ENCODE measurements at regions of chr9 and their contacts with region 1.

Region 1: GRCh38 chr9:35814841-35815543 is at the start of gene HINT2:
- DNase-seq: peak; percentile 99
- ATAC-seq: peak; percentile 85
- H3K4me3 Mint-ChIP-seq: peak within 1 kb of the TSS; percentile 93
- H3K27ac Mint-ChIP-seq: peak within 1 kb of the TSS; percentile 98
- H3K4me1 Mint-ChIP-seq: peaks cover 33% of the 10 kb centered on the region
- H3K27me3 Mint-ChIP-seq: no peaks in the 10 kb centered on the region
- total RNA-seq, gene HINT2: 47.4 to 61.1 TPM

Region 2: DNA sequence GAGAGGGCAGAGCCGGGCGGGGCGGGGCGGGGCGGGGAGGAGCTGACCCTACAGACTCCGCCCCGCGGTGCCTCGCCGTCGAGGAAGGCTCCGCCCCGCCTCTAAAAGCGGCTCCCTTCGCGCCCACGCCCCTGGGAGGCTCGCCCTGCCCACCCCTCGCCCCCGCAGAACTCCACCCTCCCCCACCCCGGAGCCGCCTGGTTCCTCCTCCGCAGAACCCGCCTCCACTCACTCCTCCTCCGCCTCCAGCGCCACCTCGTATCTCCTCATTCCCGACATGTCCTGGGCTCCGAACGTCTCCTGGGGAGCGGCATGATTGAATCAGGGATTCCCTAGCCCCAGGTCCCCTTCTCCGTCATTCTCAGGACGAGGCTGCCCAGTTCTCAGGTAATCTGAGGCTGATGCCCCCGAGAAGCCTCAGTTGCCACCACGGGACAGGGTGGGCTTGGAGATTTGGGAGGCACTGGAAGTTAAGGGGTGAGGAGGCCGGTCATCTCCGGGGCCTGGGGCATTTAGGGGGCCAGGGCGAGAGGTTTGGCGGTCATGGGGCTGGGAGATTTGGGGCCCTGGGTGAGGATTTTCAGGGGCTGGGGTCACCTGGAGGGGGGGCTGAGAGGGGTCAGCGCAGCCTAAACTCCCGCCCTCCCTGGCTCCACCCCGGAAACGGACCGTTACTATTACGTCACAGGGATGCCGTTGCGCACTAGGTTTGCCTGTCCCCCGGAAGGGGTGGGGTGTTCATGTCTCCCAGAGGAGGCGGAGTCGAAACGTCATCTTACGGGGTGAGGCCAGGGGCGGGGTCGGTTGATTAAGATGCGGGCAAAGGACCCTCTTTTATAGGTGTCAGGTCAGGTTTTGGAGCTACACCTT is 1149.4 kb before region 1 on chr9:
- CTCF ChIA-PET with region 1: no interaction called
- POLR2A ChIA-PET with region 1: no interaction called
- intact Hi-C with region 1: loop called in 1 of 2 experiments (anchors 10 kb)
- DNase-seq: peak; percentile 93
- ATAC-seq: peak; percentile 75
- H3K4me3 Mint-ChIP-seq: peak overlapping the region; percentile 77
- H3K27ac Mint-ChIP-seq: peak overlapping the region; percentile 87
- H3K4me1 Mint-ChIP-seq: peaks cover 33% of the 10 kb centered on the region
- H3K27me3 Mint-ChIP-seq: no peaks in the 10 kb centered on the region

Region 3: GRCh38 chr9:35116898-35117551 is 698.0 kb before region 1 on chr9:
- CTCF ChIA-PET with region 1: no interaction called
- POLR2A ChIA-PET with region 1: no interaction called
- intact Hi-C with region 1: loop called (anchors 1 to 10 kb)
- DNase-seq: peak; percentile 94
- ATAC-seq: peak; percentile 66
- H3K4me3 Mint-ChIP-seq: peak overlapping the region; percentile 77
- H3K27ac Mint-ChIP-seq: peak overlapping the region; percentile 87
- H3K4me1 Mint-ChIP-seq: peaks cover 44% of the 10 kb centered on the region
- H3K27me3 Mint-ChIP-seq: no peaks in the 10 kb centered on the region

Region 4: GRCh38 chr9:35579130-35579529 is 235.9 kb before region 1 on chr9:
- CTCF ChIA-PET with region 1: no interaction called
- POLR2A ChIA-PET with region 1: no interaction called
- intact Hi-C with region 1: no loop called
- DNase-seq: peak; percentile 69
- ATAC-seq: peak; percentile 96
- H3K4me3 Mint-ChIP-seq: peak overlapping the region; percentile 28
- H3K27ac Mint-ChIP-seq: peak overlapping the region; percentile 89
- H3K4me1 Mint-ChIP-seq: peaks cover 23% of the 10 kb centered on the region
- H3K27me3 Mint-ChIP-seq: no peaks in the 10 kb centered on the region

Region 5: GRCh38 chr9:35690431-35691333 is 124.3 kb before region 1 on chr9:
- CTCF ChIA-PET with region 1: no interaction called
- POLR2A ChIA-PET with region 1: no interaction called
- intact Hi-C with region 1: loop called in 1 of 2 experiments (anchors 1 kb)
- DNase-seq: peak; percentile 56
- ATAC-seq: no peak
- H3K4me3 Mint-ChIP-seq: peak overlapping the region; percentile 71
- H3K27ac Mint-ChIP-seq: peak overlapping the region; percentile 47
- H3K4me1 Mint-ChIP-seq: peaks cover 23% of the 10 kb centered on the region
- H3K27me3 Mint-ChIP-seq: no peaks in the 10 kb centered on the region

Region 6: GRCh38 chr9:35829084-35829763 is 14.2 kb after region 1 on chr9 and contains the start of gene TMEM8B:
- CTCF ChIA-PET with region 1: interaction called, 13 read pairs
- POLR2A ChIA-PET with region 1: no interaction called
- intact Hi-C with region 1: loop called (anchors 1 kb)
- DNase-seq: peak; percentile 98
- ATAC-seq: peak; percentile 92
- H3K4me3 Mint-ChIP-seq: peak within 1 kb of the TSS; percentile 78
- H3K27ac Mint-ChIP-seq: peak within 1 kb of the TSS; percentile 78
- H3K4me1 Mint-ChIP-seq: peaks cover 13% of the 10 kb centered on the region
- H3K27me3 Mint-ChIP-seq: no peaks in the 10 kb centered on the region
- total RNA-seq, gene TMEM8B: 5.8 to 6.9 TPM

Region 7: DNA sequence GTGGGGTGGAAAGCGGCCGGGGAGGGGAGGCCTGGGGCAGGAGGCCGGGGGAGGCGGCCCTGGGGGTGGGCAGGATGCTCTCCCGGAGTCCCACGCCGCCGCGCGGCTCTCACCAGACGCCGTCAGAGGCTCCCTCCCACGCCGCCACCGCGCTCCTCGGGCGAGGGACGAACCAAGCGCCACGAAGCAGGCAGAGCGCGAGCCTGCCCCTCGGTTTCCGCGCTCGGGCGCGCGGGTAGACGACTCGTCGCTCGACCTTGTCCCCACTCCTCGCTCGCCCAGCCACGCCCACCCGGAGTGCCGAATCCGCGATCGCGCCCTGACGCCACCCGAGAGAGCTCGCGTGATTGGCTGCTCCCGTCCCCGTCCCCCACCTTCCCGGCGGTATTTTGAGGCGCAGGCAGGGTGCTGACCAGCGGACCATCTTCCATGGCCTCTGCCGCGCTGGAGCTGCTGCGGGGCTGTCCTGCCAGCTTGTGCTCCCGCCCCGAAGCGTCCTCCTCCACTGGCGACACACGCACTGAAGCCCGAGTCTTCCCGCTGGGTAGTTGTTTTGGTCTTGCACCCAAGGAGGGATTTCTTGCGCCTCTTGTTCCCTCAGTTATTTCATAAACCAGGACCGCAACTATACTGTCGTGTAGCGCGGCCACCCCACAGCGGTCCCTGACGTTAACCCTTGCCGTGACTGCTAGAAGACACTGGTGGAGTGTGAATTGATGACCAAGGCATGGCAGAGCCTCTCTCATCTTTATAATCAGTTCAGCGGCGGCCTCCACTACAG is 443.4 kb after region 1 on chr9 and contains the start of gene GNE:
- CTCF ChIA-PET with region 1: no interaction called
- POLR2A ChIA-PET with region 1: no interaction called
- intact Hi-C with region 1: loop called in 1 of 2 experiments (anchors 1 kb)
- DNase-seq: peak; percentile 99
- ATAC-seq: peak; percentile 85
- H3K4me3 Mint-ChIP-seq: peak within 1 kb of the TSS; percentile 91
- H3K27ac Mint-ChIP-seq: peak within 1 kb of the TSS; percentile 90
- H3K4me1 Mint-ChIP-seq: peaks cover 8% of the 10 kb centered on the region
- H3K27me3 Mint-ChIP-seq: no peaks in the 10 kb centered on the region
- total RNA-seq, gene GNE: 17.0 to 19.0 TPM

Measured in activated CD4-positive, alpha-beta T cell treated with anti-CD3 and anti-CD28 coated beads for 36 hours (primary cell).